Vagina (tissue), 2 donors: ENCODE measurements at regions of chr3 and their contacts with region 1.

Region 1: GRCh38 chr3:188904670-188905069 is 267.1 kb upstream of the TPRG1 start:
- DNase-seq: no peak
- H3K4me3 ChIP-seq: no peak overlapping the region
- H3K27ac ChIP-seq: no peak overlapping the region
- H3K4me1 ChIP-seq: peaks cover 23% of the 10 kb centered on the region
- H3K27me3 ChIP-seq: no peaks in the 10 kb centered on the region
- CTCF ChIP-seq: no peak
- POLR2A ChIP-seq: no peak

Region 2: DNA sequence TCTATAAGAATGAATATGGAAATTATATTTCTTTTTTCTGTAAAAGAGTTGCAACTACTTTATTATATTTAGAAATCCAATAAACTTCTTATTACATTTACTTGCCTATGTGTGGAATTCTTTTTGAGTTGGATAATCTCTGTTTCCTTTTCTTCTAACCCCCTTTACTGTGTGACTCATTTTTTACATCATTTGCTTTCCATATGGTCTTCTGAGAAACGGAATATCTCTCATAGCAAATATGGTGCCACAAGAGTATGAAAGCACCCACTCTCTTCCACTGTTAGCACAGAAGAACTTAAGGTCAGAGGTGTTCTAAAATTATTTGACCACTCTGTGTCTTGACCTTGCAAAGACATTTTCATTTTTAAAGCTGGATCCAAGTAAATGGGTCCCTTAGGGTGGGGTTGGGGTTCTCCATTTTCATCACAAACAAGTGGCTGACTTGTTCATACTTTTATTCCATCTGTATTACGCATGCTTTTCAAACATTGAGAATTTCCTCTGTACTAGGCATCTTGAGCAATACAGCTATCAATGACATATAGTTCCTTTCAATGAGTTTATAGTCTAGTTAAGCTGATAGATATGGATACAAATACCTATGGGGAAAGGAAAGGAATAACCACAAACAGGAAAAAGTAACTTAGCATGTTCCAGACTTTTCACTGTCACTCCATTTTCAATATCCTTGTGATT is 13.9 kb before region 1 on chr3:
- intact Hi-C with region 1: loop called (anchors 1 kb)
- DNase-seq: no peak
- H3K4me3 ChIP-seq: no peak overlapping the region
- H3K27ac ChIP-seq: no peak overlapping the region
- H3K4me1 ChIP-seq: no peaks in the 10 kb centered on the region
- H3K27me3 ChIP-seq: no peaks in the 10 kb centered on the region
- CTCF ChIP-seq: no peak
- POLR2A ChIP-seq: no peak

Region 3: DNA sequence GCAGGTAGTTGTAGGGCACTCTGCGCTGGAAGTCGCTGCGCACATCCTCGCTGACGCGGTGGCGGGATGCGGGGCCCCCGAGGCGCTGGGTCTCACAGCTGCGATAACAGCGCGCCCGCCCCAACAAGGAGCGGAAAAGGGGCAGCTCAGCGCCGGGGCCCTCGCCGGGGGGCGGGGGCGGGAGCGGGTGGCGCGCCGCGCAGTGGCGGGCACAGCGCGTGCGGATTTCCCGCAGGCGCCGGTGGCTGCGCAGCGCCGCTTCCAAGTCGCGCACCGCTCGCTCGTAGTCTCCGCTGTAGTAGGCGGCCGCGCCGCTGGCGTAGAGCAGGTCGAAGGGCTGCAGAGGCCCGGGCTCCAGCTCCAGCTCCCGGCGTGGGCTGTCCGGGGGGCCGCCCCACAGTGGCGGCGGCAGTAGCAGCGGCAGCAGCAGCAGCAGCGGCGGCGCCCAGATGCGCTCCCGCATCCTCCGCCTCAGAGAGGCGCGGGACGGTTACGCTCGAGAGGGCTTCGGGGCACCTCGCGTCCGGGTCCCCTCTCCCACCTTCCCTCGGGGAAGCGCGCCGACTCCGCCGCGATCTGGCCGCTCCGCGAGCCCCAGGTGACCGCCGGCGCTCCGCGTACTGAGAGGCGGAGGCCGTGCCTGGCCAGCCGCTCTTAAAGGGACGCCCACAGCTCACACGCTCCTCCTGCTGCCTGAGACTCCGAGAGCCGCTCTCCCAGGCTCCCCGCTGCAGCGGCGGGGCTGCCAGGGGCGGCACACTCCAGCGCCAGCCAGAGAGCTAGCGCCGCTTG is 1215.8 kb after region 1 on chr3 and contains the start of gene P3H2:
- intact Hi-C with region 1: no loop called
- DNase-seq: no peak
- H3K4me3 ChIP-seq: peak within 1 kb of the TSS; percentile 71 to 81
- H3K27ac ChIP-seq: peak within 1 kb of the TSS; percentile 89
- H3K4me1 ChIP-seq: peaks cover 47% of the 10 kb centered on the region
- H3K27me3 ChIP-seq: no peaks in the 10 kb centered on the region
- CTCF ChIP-seq: peak in 2 of 3 experiments; percentile 10 to 28
- POLR2A ChIP-seq: no peak
- total RNA-seq, gene P3H2: 41.7 TPM